Esophagus squamous epithelium (tissue), 5 donors: ENCODE measurements at regions of chr12 and their contacts with region 1.

Region 1: GRCh38 chr12:3990501-3991280 is 117.5 kb upstream of the PARP11 start:
- DNase-seq: no peak
- H3K4me3 ChIP-seq: no peak overlapping the region
- H3K27ac ChIP-seq: no peak overlapping the region
- H3K4me1 ChIP-seq: no peaks in the 10 kb centered on the region
- H3K27me3 ChIP-seq: peaks cover 0 to 61% (median 0%) of the 10 kb centered on the region in 4 donors
- CTCF ChIP-seq: no peak
- POLR2A ChIP-seq: no peak

Region 2: DNA sequence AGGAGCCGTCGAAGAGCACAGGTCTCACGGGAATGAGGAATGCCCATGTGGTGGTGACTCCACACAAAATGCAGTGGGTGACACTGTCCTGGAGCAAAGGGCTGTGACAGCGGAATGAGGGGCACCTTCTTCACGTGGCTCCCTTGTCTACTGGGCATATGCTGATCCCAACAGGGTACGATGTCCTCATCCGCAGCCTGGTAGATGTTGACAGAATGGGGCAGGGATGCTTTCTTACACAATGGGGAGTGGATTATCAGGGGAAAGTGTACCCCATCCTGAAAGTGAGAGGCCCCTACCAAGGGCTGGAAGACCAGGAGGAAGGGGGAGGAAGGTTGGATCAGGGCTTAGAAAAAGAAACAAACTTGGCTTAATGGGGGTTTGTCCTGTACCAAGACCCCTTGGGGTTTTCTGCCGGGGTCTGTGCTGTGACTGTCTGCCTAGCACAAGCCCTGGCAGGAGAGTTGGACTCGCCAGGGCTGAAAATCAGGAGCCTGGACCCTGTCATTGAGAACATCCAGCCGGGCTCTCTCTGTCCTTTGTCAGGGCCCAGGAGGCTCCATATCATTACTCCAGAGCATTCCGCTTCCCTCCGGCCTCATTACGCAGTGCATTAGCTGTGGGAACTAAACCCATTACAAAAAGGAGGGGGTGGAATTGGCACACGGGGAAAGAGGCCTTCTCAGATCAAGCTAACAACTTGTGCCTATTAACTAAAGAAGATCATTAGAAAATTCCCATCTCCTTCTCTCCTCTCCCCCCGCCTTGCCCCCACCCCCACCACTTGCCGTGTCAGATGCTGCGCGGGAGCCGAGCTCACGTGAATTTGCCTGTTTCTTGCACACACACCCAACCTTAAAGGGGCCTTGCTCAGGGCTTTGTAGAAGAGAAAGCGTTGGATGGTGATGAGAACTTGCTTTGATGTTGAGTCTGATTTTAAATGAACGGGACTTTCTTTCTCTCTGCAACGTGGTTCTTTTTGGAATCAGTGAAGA is 54.3 kb after region 1 on chr12:
- intact Hi-C with region 1: loop called (anchors 5 kb)
- DNase-seq: no peak
- H3K4me3 ChIP-seq: no peak overlapping the region
- H3K27ac ChIP-seq: no peak overlapping the region
- H3K4me1 ChIP-seq: no peaks in the 10 kb centered on the region
- H3K27me3 ChIP-seq: peaks cover 0 to 3% (median 0%) of the 10 kb centered on the region in 4 donors
- CTCF ChIP-seq: no peak
- POLR2A ChIP-seq: no peak

Region 3: DNA sequence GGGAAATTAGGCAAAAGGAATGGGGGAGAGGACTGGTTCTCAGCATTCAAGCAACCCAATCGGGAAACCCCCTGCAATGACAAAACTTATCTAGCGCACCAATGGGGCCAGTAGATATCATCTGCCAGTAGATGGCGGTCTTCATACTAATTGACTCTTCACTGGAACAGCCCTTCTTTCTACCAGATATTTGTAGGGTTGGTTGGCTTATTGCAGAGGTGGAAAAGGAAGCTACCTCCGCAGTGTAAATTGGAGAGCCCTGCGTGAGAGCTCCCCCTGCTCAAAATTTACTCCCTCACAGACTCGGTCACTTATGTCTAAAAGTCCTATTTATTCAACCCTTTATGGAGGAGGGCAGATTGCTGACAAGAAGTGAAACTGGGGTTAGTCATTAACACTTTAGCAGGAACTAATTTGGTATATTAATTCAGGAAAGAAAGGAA is 116.8 kb after region 1 on chr12:
- intact Hi-C with region 1: no loop called
- DNase-seq: no peak
- H3K4me3 ChIP-seq: no peak overlapping the region
- H3K27ac ChIP-seq: no peak overlapping the region
- H3K4me1 ChIP-seq: no peaks in the 10 kb centered on the region
- H3K27me3 ChIP-seq: peaks cover 0 to 48% (median 0%) of the 10 kb centered on the region in 4 donors
- CTCF ChIP-seq: peak; percentile 47 to 77 (median 64)
- POLR2A ChIP-seq: no peak

Region 4: GRCh38 chr12:4118017-4118510 is 127.4 kb after region 1 on chr12:
- intact Hi-C with region 1: no loop called
- DNase-seq: no peak
- H3K4me3 ChIP-seq: no peak overlapping the region
- H3K27ac ChIP-seq: no peak overlapping the region
- H3K4me1 ChIP-seq: peaks cover 10 to 35% (median 11%) of the 10 kb centered on the region in 3 donors
- H3K27me3 ChIP-seq: peaks cover 0 to 35% (median 0%) of the 10 kb centered on the region in 4 donors
- CTCF ChIP-seq: no peak
- POLR2A ChIP-seq: no peak